Transverse colon (tissue), 4 donors: ENCODE measurements at regions of chr5 and their contacts with region 1.

Region 1: GRCh38 chr5:117143406-117143805 is 568.8 kb upstream of the SEMA6A start:
- DNase-seq: no peak
- H3K4me3 ChIP-seq: no peak overlapping the region
- H3K27ac ChIP-seq: no peak overlapping the region
- H3K4me1 ChIP-seq: no peaks in the 10 kb centered on the region
- H3K27me3 ChIP-seq: no peaks in the 10 kb centered on the region
- CTCF ChIP-seq: no peak
- EP300 ChIP-seq: no peak
- POLR2A ChIP-seq: no peak

Region 2: DNA sequence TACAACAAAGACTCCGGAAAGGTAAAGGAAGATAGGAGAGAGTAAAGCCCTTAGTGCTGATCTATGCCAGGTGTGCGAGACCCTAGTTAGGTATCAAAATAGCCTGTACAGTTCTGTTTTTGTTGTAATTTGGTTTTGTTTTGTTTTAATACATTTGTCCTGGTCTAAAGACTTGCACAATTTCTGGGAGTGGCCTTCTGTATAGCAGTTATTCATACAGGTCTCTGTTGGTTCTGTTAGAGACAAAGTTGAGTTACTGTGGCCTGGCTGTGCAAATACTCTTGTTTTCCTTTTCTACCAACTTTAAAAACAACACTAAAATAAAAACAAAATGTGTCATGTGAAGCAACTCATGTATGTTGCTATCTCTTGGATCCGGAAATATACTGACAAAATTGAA is 895.0 kb before region 1 on chr5:
- in situ Hi-C with region 1: no loop called
- intact Hi-C with region 1: loop called (anchors 5 kb)
- DNase-seq: no peak
- H3K4me3 ChIP-seq: no peak overlapping the region
- H3K27ac ChIP-seq: no peak overlapping the region
- H3K4me1 ChIP-seq: no peaks in the 10 kb centered on the region
- H3K27me3 ChIP-seq: no peaks in the 10 kb centered on the region
- CTCF ChIP-seq: no peak
- EP300 ChIP-seq: no peak
- POLR2A ChIP-seq: no peak

Region 3: GRCh38 chr5:117095346-117096332 is 47.8 kb before region 1 on chr5:
- in situ Hi-C with region 1: no loop called
- intact Hi-C with region 1: no loop called
- DNase-seq: no peak
- H3K4me3 ChIP-seq: no peak overlapping the region
- H3K27ac ChIP-seq: no peak overlapping the region
- H3K4me1 ChIP-seq: no peaks in the 10 kb centered on the region
- H3K27me3 ChIP-seq: no peaks in the 10 kb centered on the region
- CTCF ChIP-seq: no peak
- EP300 ChIP-seq: no peak
- POLR2A ChIP-seq: no peak